A549 (cell line): ENCODE measurements at regions of chrX and their contacts with region 1.

Region 1: GRCh38 chrX:110146521-110146920 is 143.6 kb downstream of the TMEM164 start:
- DNase-seq: peak; percentile 52 to 55
- ATAC-seq: peak; percentile 85 to 90
- H3K4me3 ChIP-seq: no peak overlapping the region
- H3K27ac ChIP-seq: peak overlapping the region; percentile 55 to 60; a peak in 5 of 6 replicates
- H3K4me1 ChIP-seq: peaks cover 21% of the 10 kb centered on the region
- CTCF ChIP-seq: peak; percentile 67
- EP300 ChIP-seq: no peak
- POLR2A ChIP-seq: no peak
- RAD21 ChIP-seq: peak; percentile 74 to 82

Region 2: DNA sequence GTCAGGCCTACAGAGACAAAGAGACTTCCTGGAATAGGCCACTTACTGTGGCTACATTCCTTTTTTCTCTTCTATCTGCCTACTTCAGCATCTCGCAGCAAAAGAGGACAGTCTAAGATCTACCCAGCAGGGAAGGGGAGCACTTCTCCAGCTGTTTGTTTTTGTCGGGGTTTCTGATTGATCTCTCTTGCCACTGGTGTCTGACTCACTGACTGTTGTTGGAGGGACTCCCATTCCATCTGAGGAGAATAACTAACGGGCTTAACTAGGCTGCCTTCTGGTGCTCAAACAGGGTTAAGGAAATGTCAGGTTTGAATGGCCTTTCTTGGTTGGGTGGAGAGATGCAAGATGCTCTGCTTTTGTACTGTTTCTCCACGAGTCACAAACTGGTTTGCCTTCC is 243.9 kb before region 1 on chrX:
- CTCF ChIA-PET with region 1: interaction called, 45 read pairs
- POLR2A ChIA-PET with region 1: no interaction called
- DNase-seq: peak; percentile 42 to 47
- ATAC-seq: peak; percentile 76 to 90
- H3K4me3 ChIP-seq: no peak overlapping the region
- H3K27ac ChIP-seq: peak overlapping the region in 1 of 2 experiments; percentile 59; a peak in 2 of 6 replicates
- H3K4me1 ChIP-seq: peaks cover 16% of the 10 kb centered on the region
- CTCF ChIP-seq: no peak
- EP300 ChIP-seq: no peak
- POLR2A ChIP-seq: no peak
- RAD21 ChIP-seq: no peak

Region 3: GRCh38 chrX:110002300-110003166 is 144.0 kb before region 1 on chrX and contains the start of gene TMEM164:
- CTCF ChIA-PET with region 1: interaction called, 11 read pairs
- POLR2A ChIA-PET with region 1: no interaction called
- DNase-seq: peak; percentile 69 to 80
- ATAC-seq: peak; percentile 87 to 92
- H3K4me3 ChIP-seq: peak within 1 kb of the TSS; percentile 84
- H3K27ac ChIP-seq: peak within 1 kb of the TSS; percentile 100
- H3K4me1 ChIP-seq: peaks cover 47% of the 10 kb centered on the region
- CTCF ChIP-seq: no peak
- EP300 ChIP-seq: no peak
- POLR2A ChIP-seq: peak; percentile 83
- RAD21 ChIP-seq: no peak
- polyA plus RNA-seq, gene TMEM164: 32.0 and 36.3 TPM in 2 replicates

Region 4: DNA sequence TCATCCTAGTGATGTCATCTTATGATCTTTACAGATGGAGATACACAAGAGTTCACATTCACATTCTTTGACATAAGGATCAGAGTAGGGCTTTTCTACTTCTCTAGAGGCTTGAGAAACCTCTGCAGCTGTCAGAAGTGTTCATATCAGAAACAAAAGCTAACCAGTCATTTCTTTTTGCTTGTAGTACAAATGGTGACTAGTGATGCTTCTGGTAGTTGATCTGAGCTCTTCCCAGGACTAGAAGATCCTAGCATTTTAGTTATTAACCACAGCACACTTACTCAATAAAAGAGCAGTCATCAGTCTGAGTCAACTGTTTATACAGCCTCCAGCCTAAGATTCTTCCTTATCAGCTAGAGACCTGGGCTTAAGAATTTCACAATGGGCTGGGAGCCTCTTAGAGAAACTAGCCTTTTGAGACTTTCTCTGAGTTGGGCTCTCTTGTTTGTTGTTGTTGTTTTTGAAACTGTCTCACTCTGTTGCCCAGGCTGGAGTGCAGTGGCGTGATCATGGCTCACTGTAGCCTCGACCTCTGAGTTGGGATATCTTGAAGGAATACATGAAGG is 59.5 kb before region 1 on chrX:
- CTCF ChIA-PET with region 1: interaction called, 11 read pairs
- POLR2A ChIA-PET with region 1: no interaction called
- DNase-seq: peak; percentile 72 to 94
- ATAC-seq: peak; percentile 84 to 86
- H3K4me3 ChIP-seq: no peak overlapping the region; the same call in 1 of the 3 replicates
- H3K27ac ChIP-seq: peak overlapping the region; percentile 96 to 99
- H3K4me1 ChIP-seq: peaks cover 72% of the 10 kb centered on the region
- CTCF ChIP-seq: no peak
- EP300 ChIP-seq: peak; percentile 59 to 75; a peak in 3 of 5 replicates
- POLR2A ChIP-seq: no peak
- RAD21 ChIP-seq: no peak; a peak in 1 of 5 replicates

Region 5: DNA sequence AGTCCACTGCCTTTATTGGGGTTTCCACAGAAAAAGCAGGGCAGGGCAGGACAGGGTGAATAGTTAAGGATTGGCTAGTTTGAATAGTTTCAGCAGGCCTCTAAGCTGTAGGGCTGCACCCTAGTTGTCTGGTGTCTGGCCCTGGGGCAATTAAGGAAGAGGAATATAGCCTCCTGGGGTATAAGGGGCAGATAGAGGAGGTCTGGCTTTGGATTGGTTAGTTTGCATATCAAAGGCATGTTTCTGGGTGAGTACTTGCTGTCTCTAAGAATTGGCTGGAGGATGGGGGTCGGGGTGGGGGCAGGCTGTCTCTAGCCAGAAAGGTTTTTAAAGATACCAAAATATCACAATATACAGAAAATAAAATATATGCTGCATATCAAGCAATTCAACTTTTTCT is 43.2 kb before region 1 on chrX:
- CTCF ChIA-PET with region 1: no interaction called
- POLR2A ChIA-PET with region 1: no interaction called
- DNase-seq: no peak
- ATAC-seq: no peak
- H3K4me3 ChIP-seq: no peak overlapping the region
- H3K27ac ChIP-seq: peak overlapping the region; percentile 31 to 49; a peak in 3 of 6 replicates
- H3K4me1 ChIP-seq: peaks cover 14% of the 10 kb centered on the region
- CTCF ChIP-seq: no peak
- EP300 ChIP-seq: no peak
- POLR2A ChIP-seq: no peak
- RAD21 ChIP-seq: no peak

Region 6: DNA sequence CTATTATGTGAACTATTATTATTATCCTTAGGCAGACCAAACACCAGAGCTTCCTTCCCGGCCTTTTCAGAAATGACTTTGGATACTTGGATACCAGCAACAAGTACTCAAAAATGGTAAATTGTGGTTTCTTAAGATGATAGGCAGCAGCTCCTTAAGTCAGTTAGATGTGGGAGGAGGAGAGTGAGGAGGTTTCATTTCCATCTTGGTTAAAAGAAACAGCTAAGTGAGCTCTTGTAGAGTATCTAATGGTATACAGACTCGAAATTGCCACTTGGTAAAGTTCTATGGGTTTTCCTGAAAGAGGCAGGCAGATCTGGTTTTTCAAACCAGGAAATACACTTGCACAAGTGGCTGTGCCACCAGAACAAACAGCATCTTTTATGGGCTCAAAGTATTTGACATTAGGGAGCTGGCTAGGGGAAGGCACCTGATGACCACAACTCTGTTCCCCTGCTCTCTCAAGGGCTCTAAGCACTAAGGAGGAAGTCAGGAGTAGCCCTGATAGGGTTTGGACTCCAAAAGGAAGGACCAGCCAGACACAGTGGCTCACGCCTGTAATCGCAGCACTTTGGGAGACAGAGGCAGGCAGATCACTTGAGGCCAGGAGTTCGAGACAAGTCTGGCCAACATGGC is 12.7 kb before region 1 on chrX:
- CTCF ChIA-PET with region 1: interaction called, 23 read pairs
- POLR2A ChIA-PET with region 1: no interaction called
- DNase-seq: no peak
- ATAC-seq: no peak
- H3K4me3 ChIP-seq: no peak overlapping the region
- H3K27ac ChIP-seq: no peak overlapping the region
- H3K4me1 ChIP-seq: peaks cover 18% of the 10 kb centered on the region
- CTCF ChIP-seq: no peak
- EP300 ChIP-seq: no peak
- POLR2A ChIP-seq: no peak
- RAD21 ChIP-seq: no peak

Region 7: DNA sequence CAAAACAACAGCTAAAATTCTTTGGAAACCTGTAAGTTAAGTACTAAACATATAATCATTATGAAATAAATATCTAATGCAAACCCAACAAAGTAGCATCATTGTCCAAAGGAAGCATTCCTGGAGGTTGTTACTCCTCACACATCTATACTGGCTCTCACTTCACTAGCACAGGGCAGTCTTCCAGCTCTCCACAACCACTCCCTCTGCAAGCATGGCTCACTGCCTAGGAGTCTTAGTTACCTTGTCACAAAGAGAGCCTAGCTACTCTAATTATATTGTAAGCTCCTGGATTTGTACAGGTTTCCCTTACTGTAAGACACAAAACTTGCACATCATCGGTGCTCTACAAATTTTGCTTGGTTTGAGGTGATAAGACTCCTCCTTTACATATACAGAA is 95.3 kb after region 1 on chrX:
- CTCF ChIA-PET with region 1: no interaction called
- POLR2A ChIA-PET with region 1: no interaction called
- DNase-seq: no peak
- ATAC-seq: no peak
- H3K4me3 ChIP-seq: no peak overlapping the region
- H3K27ac ChIP-seq: no peak overlapping the region
- H3K4me1 ChIP-seq: peaks cover 12% of the 10 kb centered on the region; the same call in 2 of the 3 replicates
- CTCF ChIP-seq: no peak
- EP300 ChIP-seq: no peak
- POLR2A ChIP-seq: no peak
- RAD21 ChIP-seq: no peak

Region 8: GRCh38 chrX:110418316-110419235 is 272.1 kb after region 1 on chrX:
- CTCF ChIA-PET with region 1: interaction called, 848 read pairs
- POLR2A ChIA-PET with region 1: no interaction called
- DNase-seq: peak; percentile 49 to 59
- ATAC-seq: peak; percentile 85 to 89
- H3K4me3 ChIP-seq: no peak overlapping the region
- H3K27ac ChIP-seq: no peak overlapping the region
- H3K4me1 ChIP-seq: peaks cover 11% of the 10 kb centered on the region; the same call in 1 of the 3 replicates
- CTCF ChIP-seq: no peak; the same call in 2 of the 3 replicates
- EP300 ChIP-seq: no peak
- POLR2A ChIP-seq: no peak
- RAD21 ChIP-seq: peak; percentile 48 to 55; a peak in 4 of 5 replicates